Gastrocnemius medialis (tissue), 4 donors: ENCODE measurements at regions of chr14 and their contacts with region 1.

Region 1: GRCh38 chr14:73728717-73729330 is 14.6 kb upstream of the PNMA1 start:
- DNase-seq: peak; percentile 75 to 83
- ATAC-seq: peak; percentile 26
- H3K4me3 ChIP-seq: no peak overlapping the region
- H3K27ac ChIP-seq: peak overlapping the region; percentile 65 to 95 (median 90)
- H3K4me1 ChIP-seq: peaks cover 43 to 58% of the 10 kb centered on the region in 2 donors
- H3K27me3 ChIP-seq: no peaks in the 10 kb centered on the region
- CTCF ChIP-seq: peak; percentile 93 to 98 (median 96)
- POLR2A ChIP-seq: no peak

Region 2: GRCh38 chr14:73633116-73634010 is 95.5 kb before region 1 on chr14:
- in situ Hi-C with region 1: loop called in 1 of 4 experiments (anchors 10 kb)
- intact Hi-C with region 1: no loop called
- DNase-seq: peak; percentile 24 to 65
- ATAC-seq: peak; percentile 81 to 82
- H3K4me3 ChIP-seq: peak overlapping the region; percentile 69 to 80 (median 71)
- H3K27ac ChIP-seq: peak overlapping the region; percentile 80 to 83 (median 82)
- H3K4me1 ChIP-seq: peaks cover 5 to 11% of the 10 kb centered on the region in 2 donors
- H3K27me3 ChIP-seq: no peaks in the 10 kb centered on the region
- CTCF ChIP-seq: peak; percentile 86 to 94 (median 88)
- POLR2A ChIP-seq: no peak

Region 3: GRCh38 chr14:73785873-73786695 is 57.3 kb after region 1 on chr14:
- in situ Hi-C with region 1: loop called in 1 of 4 experiments (anchors 10 kb)
- intact Hi-C with region 1: loop called (anchors 2 kb)
- DNase-seq: peak; percentile 83 to 86
- ATAC-seq: peak; percentile 82 to 88
- H3K4me3 ChIP-seq: peak overlapping the region; percentile 70 to 84 (median 78)
- H3K27ac ChIP-seq: peak overlapping the region; percentile 90 to 97 (median 96)
- H3K4me1 ChIP-seq: peaks cover 69% of the 10 kb centered on the region in 2 donors
- H3K27me3 ChIP-seq: no peaks in the 10 kb centered on the region
- CTCF ChIP-seq: peak; percentile 46 to 66 (median 58)
- POLR2A ChIP-seq: peak; percentile 69 to 77

Region 4: DNA sequence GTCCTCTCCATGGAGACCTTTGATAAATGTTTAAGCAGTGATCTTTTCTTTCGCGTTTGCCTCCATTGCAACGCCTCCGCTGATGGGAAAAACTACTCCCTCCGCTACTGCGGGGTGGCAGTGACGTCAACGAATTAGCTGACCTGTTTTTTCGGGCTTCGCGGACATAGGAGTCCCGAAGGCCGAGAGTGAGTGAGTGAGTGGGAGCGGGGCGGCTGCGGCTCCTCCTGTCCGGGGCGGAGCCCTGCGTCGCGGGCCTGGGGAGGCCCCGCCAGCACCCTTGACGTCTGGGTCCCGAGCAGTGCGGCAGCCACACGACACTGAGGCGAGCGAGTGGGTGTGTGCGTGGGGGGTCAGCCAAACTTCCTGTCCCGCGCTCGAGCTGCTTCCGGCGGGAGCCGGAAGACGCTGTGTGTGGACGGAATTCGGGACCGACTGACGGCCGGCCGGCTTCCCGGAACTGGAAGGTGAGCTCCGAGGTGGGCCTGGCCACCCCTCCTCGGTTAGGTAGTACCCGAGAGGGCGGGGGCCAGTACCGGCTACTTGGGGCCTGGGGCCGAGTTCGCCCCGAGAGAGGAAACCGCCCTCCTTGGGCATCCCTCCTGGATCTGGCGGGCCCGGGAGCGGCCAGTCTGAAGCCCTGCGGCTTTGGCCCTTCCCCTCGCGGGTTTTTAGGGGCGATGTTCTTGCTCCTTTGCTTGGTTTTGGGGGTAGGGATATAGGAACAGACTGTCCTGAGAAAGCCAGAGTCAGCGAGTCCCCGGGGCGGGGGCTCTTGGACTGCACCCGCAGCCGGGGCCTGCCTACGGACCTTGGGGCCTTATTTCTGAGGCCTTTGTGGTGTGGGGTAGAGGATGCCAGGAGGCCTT is 157.9 kb after region 1 on chr14 and contains the start of gene ZNF410:
- in situ Hi-C with region 1: no loop called
- intact Hi-C with region 1: loop called (anchors 5 kb)
- DNase-seq: peak; percentile 92
- ATAC-seq: peak; percentile 95 to 96
- H3K4me3 ChIP-seq: peak within 1 kb of the TSS; percentile 79 to 100 (median 84)
- H3K27ac ChIP-seq: peak within 1 kb of the TSS; percentile 84 to 98 (median 92)
- H3K4me1 ChIP-seq: peaks cover 30 to 31% of the 10 kb centered on the region in 2 donors
- H3K27me3 ChIP-seq: no peaks in the 10 kb centered on the region
- CTCF ChIP-seq: peak in 1 of 5 experiments; percentile 11
- POLR2A ChIP-seq: peak; percentile 72 to 78
- total RNA-seq, gene ZNF410: 22.6 to 33.2 (median 24.0) TPM

Region 5: DNA sequence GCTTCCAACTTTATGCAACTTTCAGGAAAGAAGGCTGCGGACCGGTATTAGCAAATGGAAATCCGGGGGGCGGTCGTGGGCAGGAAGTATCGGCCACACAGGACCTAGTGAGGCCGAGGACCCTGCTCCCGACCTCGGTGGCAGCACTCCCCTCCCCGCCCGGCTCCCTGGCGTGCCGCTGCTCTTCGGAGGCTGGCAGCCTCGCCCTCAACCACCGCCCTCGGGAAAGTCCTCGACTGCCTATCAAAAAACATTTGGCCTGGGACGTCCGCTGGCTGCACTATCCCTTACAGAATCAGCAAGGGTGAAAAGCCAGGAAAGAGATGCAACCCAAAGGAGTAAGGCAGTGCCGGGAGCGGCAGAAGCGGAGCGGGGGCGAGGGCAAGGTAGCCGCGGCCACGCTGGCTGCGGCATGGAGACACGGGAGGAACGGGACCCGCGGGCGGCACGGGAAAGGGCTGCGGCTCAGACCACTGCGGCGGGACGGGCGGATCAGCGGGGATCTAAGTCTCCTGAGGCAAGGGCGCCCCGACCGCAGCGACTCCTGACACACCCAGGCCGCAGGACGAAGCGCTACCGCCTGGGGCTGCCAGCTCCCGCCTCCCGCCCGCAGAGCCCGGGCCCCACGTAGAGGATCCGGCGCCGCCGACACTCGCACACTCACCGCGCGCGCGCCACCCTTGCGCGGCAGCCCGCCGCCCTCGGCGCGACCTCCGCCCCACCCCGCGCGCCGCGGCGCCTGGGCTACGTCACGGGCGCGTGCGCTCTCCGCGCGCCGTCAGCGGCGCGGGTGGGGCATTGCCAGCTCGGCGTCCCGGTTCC is 290.0 kb after region 1 on chr14 and contains the starts of genes BBOF1 and ENTPD5:
- in situ Hi-C with region 1: no loop called
- intact Hi-C with region 1: loop called (anchors 2 kb)
- DNase-seq: peak; percentile 70 to 83
- ATAC-seq: peak; percentile 92 to 95
- H3K4me3 ChIP-seq: peak within 1 kb of the TSS; percentile 66 to 94 (median 86)
- H3K27ac ChIP-seq: peak within 1 kb of the TSS; percentile 90 to 100 (median 98)
- H3K4me1 ChIP-seq: peaks cover 6 to 12% of the 10 kb centered on the region in 2 donors
- H3K27me3 ChIP-seq: no peaks in the 10 kb centered on the region
- CTCF ChIP-seq: peak in 1 of 5 experiments; percentile 23
- POLR2A ChIP-seq: peak; percentile 93 to 95
- total RNA-seq, gene BBOF1: 0.95 to 8.7 (median 1.9) TPM
- total RNA-seq, gene ENTPD5: 5.4 to 10.2 (median 7.3) TPM